Right ventricle myocardium inferior (tissue), 1 donor: ENCODE measurements at regions of chr11 and their contacts with region 1.

Region 1: GRCh38 chr11:93741094-93741881 is at the starts of genes C11orf54 and TAF1D:
- DNase-seq: peak; percentile 98
- ATAC-seq: peak; percentile 98
- total RNA-seq, gene C11orf54: 30.2 TPM
- total RNA-seq, gene TAF1D: 32.4 TPM

Region 2: DNA sequence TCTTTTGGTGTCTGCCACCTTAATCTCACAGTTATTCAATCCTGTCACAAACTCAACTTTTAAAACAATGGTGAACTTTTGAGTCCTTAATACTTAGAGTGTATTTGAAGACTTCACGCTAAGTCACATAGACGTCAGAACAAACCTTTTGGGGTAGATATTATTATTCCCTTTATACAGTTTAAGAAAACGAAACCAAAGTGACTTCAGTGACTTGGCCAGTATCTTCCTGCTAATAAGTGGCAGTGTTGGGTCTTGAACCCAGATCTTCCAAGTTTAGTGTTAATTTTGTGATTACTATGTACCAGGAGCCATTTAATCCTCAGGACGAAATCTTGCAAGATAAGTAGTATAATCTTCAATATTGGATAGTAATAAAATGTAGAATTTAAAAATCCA is 79.1 kb before region 1 on chr11:
- intact Hi-C with region 1: loop called (anchors 5 kb)
- DNase-seq: no peak
- ATAC-seq: no peak

Region 3: GRCh38 chr11:93784152-93784934 is 43.1 kb after region 1 on chr11 and contains the start of gene MED17:
- intact Hi-C with region 1: loop called (anchors 1 kb)
- DNase-seq: peak; percentile 95
- ATAC-seq: peak; percentile 100
- total RNA-seq, gene MED17: 15.9 TPM

Region 4: DNA sequence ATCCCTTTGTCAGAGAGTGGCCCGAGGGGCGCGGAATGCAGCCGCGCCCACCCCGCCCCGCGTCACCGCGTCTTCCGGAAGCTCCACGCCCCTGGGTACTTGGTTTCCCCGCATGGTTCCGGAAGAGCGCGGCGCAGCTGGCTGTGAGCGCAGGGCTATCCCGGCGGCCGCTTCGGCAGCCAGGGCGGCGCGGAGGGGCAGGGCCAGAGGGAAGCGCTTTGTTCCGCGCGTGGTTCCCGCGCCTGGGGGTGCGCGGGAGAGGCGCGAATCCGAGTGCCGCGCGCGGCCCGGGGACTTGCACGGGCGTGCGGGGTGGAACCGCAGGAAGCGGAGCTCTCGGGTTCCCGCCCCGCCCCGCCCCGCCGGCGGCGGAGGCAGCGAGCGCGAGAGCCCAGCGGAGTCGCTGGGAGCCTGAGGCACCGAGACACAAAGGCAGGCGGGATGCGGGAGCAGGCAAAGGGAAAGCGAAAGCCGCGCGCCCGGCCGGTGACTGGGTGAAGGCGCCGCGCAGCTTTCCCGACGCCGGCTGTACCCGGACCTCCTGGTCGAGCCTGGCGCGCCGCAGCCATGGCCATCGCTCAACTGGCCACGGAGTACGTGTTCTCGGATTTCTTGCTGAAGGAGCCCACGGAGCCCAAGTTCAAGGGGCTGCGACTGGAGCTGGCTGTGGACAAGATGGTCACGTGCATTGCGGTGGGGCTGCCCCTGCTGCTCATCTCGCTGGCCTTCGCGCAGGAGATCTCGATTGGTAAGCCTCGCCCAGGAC is 387.6 kb after region 1 on chr11 and contains the start of gene PANX1:
- intact Hi-C with region 1: no loop called
- DNase-seq: peak; percentile 92
- ATAC-seq: peak; percentile 94
- total RNA-seq, gene PANX1: 27.2 TPM

Region 5: DNA sequence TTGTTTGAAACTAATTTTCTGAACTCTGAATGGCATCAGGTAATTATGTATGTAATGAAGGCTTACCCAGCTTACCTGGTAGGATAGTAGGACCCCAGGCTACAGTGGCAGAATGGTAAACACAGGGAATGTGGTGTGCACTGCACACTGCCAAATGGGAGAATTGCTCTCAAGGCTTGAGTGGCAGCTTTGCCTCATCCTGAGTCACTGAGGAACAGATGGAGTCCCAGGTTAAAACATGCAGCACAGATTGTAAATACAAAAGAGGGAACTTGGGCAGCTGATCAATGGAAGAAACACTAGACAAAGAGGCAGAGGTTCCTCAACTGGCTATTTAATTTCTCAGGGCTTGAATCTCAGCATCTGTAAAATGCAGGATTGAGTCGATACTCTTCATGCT is 635.6 kb after region 1 on chr11:
- intact Hi-C with region 1: no loop called
- DNase-seq: no peak
- ATAC-seq: no peak